GM18951 (cell line): ENCODE measurements at regions of chr7 and their contacts with region 1.

Region 1: GRCh38 chr7:140003913-140004382 is 58.8 kb downstream of the PARP12 start:
- POLR2A ChIP-seq: no peak

Region 2: GRCh38 chr7:139505563-139505962 is 498.4 kb before region 1 on chr7:
- in situ Hi-C with region 1: loop called (anchors 10 kb)
- POLR2A ChIP-seq: no peak

Region 3: GRCh38 chr7:139645572-139646523 is 358.1 kb before region 1 on chr7:
- in situ Hi-C with region 1: loop called (anchors 10 kb)
- POLR2A ChIP-seq: no peak

Region 4: DNA sequence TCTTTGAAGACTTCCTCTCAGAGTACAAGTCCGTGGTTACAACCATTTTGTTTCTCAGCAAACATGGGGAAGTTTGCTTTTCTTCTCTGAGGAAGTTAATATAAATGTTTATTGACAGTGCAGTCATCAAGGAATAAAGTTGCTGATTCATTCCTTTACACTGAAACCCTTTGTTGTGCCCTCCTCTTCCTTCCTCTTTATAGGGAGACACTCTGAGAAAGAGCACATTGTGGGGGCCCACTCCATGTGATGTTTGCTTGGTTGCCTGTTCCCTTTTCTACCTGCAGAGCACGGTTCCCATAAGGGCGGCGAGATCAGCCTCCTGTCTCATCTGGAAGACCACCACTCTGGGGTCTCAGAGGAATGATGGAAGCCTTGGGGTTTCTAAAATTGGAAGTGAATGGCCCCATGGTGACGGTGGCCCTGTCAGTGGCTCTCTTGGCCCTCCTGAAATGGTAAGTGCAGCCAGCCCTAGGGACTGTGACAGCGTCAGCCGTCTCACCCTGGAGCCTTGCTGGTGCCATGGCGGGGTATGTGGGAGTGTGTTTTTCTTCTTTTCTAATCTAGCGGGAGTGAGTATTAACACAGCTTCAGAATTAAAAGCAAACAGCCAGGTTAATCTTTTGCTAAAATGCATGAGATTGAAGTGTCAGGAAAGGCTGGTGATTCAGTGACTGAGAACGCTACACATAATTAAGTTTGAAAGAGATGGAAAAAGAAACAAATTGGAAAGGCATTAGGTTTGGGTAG is 174.7 kb before region 1 on chr7 and contains the start of gene TBXAS1:
- in situ Hi-C with region 1: no loop called
- POLR2A ChIP-seq: no peak

Region 5: GRCh38 chr7:140249036-140249806 is 245.3 kb after region 1 on chr7:
- in situ Hi-C with region 1: no loop called
- POLR2A ChIP-seq: no peak

Region 6: DNA sequence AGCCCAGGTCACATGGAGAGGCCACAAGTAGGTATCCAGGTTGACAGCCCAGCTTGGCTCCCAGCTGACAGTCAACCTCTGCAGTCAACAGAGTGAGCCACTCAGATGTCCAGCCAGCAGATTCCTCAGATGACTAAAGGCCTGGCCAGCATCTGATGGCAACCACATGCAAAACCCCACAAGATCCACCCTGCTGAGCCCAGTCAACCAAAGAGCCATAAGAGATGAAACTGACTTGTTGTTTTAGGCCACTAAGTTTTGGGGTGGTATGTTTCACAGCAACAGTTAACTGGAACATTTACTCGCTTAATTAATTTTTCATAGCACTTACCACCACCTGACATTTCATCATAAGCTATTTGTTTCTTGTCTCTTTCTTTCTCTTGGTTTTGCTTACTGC is 280.1 kb after region 1 on chr7:
- in situ Hi-C with region 1: no loop called
- POLR2A ChIP-seq: no peak

Region 7: DNA sequence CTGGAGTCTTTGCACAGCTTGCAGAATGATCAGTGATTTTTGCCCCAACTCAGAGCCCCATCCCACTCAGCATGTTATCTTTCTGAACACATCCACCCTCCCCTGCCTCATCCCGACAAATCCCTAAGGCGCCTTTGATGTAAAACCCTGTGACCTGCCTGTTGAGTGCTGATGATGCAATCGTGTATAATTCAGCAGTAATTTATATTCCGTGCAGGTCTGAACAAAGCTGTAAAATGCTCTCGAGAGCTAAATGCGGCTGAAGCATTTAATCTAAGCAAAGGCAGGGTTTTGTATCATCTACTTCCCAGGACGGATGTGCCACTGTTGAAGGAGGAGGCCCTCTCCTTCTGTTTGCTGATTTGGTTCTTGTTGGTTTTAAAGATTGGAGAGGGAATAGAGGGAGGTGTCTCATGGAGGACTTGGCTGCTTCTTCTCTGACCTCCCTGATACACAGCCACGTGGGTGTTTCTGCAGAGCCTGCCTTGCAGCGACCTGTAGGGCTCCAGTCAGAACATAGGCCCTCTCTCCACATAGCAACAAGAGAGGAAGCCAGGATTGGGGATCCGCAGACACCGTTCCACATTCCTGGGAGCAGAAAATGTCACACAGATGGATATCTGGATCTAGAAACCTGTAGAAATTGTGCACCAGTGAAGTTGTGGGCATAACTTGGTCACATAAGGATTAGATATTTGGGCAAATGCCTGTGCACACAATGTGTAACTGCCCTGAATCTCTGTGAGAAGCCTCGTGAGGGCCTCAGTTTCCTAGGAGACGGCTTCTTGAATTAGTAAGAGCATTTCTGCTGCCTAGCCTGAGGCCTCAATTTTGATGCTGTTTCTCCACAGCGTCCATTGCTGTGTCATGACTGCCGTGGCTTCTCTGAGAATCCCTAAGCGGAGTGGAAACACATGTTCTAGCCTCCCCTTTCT is 1457.1 kb after region 1 on chr7:
- in situ Hi-C with region 1: no loop called
- POLR2A ChIP-seq: no peak